Activated T-helper 1 cell treated with anti-CD3 and anti-CD28 coated beads, Interleukin-12 subunit alpha, Interleukin-12 subunit beta, Interleukin-2, Interleukin-4 antibody, amounts not matched to agents 30 ng/mL and 10 ng/mL and 1 ng/mL, durations not matched to agents 14 hours and 24 hours and 36 hours (primary cell): ENCODE measurements at regions of chr17 and their contacts with region 1.

Region 1: DNA sequence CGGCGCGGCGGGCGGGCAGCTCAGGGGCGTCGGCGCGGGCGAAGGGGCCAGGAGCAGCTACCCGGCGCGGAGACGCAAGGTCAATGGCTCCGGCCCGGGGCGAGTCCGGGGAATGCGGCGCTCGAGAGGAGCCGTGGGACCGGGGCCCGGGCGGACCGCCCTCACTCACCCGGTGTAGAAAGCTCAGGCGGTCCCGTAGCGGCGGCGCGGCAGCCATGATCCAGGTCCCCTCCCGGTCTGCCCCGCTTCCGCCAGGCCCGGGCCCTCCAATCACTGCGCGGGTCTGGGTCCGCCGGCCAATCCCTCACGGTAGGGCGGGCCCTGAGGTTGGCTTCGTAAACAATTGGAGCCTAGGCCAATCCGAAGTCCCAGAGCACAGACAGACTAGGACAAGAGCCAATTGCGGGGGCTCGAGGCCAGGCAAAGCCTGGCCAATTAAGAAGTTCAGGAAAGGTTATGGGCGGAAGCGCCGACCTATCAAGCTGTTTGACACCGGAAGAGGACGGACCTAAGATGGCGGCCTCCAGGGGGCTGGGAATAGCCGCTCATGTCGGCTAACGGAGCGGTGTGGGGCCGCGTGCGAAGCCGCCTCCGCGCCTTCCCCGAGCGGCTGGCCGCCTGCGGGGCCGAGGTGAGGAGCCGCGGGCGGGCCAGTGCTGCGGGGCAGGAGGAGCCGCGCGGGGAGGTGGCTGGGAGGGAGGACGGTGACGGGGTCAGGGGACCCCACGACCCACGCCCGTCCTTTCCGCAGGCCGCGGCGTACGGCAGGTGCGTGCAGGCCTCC is at the starts of genes NDUFAF8 and TEPSIN:
- DNase-seq: peak; percentile 95
- H3K4me3 Mint-ChIP-seq: peak within 1 kb of the TSS; percentile 96
- H3K27ac Mint-ChIP-seq: peak within 1 kb of the TSS; percentile 94
- H3K4me1 Mint-ChIP-seq: peaks cover 19% of the 10 kb centered on the region
- H3K27me3 Mint-ChIP-seq: peaks cover 2% of the 10 kb centered on the region
- total RNA-seq, gene NDUFAF8: 71.9 and 78.3 TPM in 2 replicates
- total RNA-seq, gene TEPSIN: 37.7 and 41.0 TPM in 2 replicates

Region 2: GRCh38 chr17:80414803-80415625 is 824.0 kb before region 1 on chr17 and contains the start of gene ENDOV:
- intact Hi-C with region 1: loop called (anchors 1 kb)
- DNase-seq: peak; percentile 90
- H3K4me3 Mint-ChIP-seq: peak within 1 kb of the TSS; percentile 87
- H3K27ac Mint-ChIP-seq: peak within 1 kb of the TSS; percentile 65
- H3K4me1 Mint-ChIP-seq: peaks cover 18% of the 10 kb centered on the region
- H3K27me3 Mint-ChIP-seq: peaks cover 16% of the 10 kb centered on the region
- total RNA-seq, gene ENDOV: 15.6 and 16.9 TPM in 2 replicates

Region 3: DNA sequence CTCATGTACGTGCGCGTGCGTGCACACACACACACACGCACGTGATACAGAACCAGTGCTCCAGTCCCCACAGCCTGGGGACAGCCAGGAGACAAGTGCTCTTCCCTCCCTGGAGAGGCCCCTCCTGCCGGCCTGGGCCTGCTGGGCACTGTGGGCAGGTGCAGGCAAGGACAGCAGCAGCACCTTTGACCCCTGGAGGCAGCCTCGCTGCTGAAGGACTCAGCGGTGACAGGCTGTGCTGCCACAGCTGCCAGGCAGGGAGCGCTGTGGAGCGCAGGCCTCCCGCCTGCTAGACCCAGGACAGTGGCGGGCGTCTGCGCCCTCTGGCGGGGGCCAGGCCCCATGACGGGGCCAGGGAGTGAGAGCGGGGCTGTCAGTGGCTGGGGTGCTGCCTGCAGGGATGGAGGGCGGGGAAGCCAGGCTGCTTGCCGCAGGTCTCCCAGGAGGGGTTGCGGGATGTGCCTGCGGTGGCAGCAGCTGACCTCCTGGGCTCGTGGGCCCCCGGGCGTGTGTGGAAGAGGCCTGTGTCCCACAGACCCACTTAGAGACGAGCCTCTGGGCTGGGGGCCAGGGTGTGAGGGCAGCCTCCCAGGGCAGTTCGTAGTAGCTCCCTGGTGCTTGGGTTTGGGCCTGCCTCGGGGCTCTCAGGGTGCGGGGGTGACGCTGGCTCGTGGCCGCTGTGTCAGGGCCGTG is 137.2 kb before region 1 on chr17:
- intact Hi-C with region 1: loop called (anchors 1 kb)
- DNase-seq: peak; percentile 86
- H3K4me3 Mint-ChIP-seq: no peak overlapping the region
- H3K27ac Mint-ChIP-seq: no peak overlapping the region
- H3K4me1 Mint-ChIP-seq: peaks cover 2% of the 10 kb centered on the region
- H3K27me3 Mint-ChIP-seq: peaks cover 1% of the 10 kb centered on the region

Region 4: GRCh38 chr17:81142301-81143199 is 96.5 kb before region 1 on chr17:
- intact Hi-C with region 1: loop called (anchors 1 kb)
- DNase-seq: peak; percentile 34
- H3K4me3 Mint-ChIP-seq: no peak overlapping the region
- H3K27ac Mint-ChIP-seq: no peak overlapping the region
- H3K4me1 Mint-ChIP-seq: no peaks in the 10 kb centered on the region
- H3K27me3 Mint-ChIP-seq: no peaks in the 10 kb centered on the region

Region 5: GRCh38 chr17:81294856-81295680 is 56.1 kb after region 1 on chr17 and contains the start of gene SLC38A10:
- intact Hi-C with region 1: loop called (anchors 1 kb)
- DNase-seq: peak; percentile 92
- H3K4me3 Mint-ChIP-seq: peak within 1 kb of the TSS; percentile 92
- H3K27ac Mint-ChIP-seq: peak within 1 kb of the TSS; percentile 90
- H3K4me1 Mint-ChIP-seq: peaks cover 27% of the 10 kb centered on the region
- H3K27me3 Mint-ChIP-seq: no peaks in the 10 kb centered on the region
- total RNA-seq, gene SLC38A10: 99.7 and 101 TPM in 2 replicates

Region 6: GRCh38 chr17:81484195-81484979 is 245.4 kb after region 1 on chr17:
- intact Hi-C with region 1: loop called (anchors 1 kb)
- DNase-seq: peak; percentile 86
- H3K4me3 Mint-ChIP-seq: no peak overlapping the region
- H3K27ac Mint-ChIP-seq: no peak overlapping the region
- H3K4me1 Mint-ChIP-seq: no peaks in the 10 kb centered on the region
- H3K27me3 Mint-ChIP-seq: peaks cover 30% of the 10 kb centered on the region